Heart right ventricle (tissue), 16 donors: ENCODE measurements at regions of chr3 and their contacts with region 1.

Region 1: DNA sequence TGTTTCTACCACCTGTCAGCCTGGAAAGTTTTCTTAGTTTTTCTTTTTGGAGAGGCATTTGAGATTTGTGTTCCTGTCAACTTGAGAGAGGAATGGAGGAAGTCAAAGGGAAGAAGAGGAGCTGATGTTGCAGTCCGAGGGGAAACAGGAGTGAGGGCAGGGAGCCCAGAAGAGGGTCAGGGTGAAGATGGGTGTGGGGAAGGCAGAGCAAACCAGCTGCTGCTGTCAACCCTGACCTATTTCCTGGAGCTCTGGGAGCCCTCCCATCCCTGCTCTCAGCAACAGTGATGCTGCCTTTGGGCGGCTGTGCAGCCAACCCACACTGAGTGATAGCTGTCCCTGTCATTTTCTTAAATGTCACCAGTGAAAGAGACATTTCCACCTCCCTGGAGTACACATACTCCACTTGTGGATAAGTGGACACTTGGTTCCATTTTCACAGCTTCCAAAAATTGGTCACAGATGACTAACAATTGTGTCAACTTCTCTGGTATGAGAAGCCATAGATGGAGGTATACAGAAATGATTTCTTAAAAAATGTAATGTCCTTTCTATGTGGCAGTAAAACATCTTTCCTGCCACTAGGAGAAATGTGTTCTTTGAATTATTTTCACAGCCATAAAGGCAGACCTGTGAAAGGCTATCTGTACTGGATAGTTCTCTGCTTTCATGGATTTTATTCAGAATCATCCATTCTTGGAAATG is 556.3 kb upstream of the TBL1XR1 start:
- DNase-seq: peak; percentile 65 to 75
- ATAC-seq: peak; percentile 91 to 98 (median 94)
- H3K4me3 ChIP-seq: no peak overlapping the region
- H3K27ac ChIP-seq: peak overlapping the region in 9 of 10 donors; percentile 27 to 68 (median 50)
- H3K4me1 ChIP-seq: peaks cover 7 to 40% (median 26%) of the 10 kb centered on the region in 9 donors
- H3K27me3 ChIP-seq: no peaks in the 10 kb centered on the region
- CTCF ChIP-seq: no peak

Region 2: GRCh38 chr3:177516158-177517011 is 237.2 kb before region 1 on chr3:
- intact Hi-C with region 1: loop called in 1 of 10 experiments (anchors 10 kb)
- DNase-seq: peak; percentile 43 to 56
- ATAC-seq: peak; percentile 63 to 93 (median 84)
- H3K4me3 ChIP-seq: no peak overlapping the region
- H3K27ac ChIP-seq: peak overlapping the region; percentile 18 to 83 (median 62)
- H3K4me1 ChIP-seq: peaks cover 6 to 57% (median 35%) of the 10 kb centered on the region in 9 donors
- H3K27me3 ChIP-seq: no peaks in the 10 kb centered on the region
- CTCF ChIP-seq: no peak

Region 3: GRCh38 chr3:177944228-177944661 is 190.6 kb after region 1 on chr3:
- intact Hi-C with region 1: no loop called
- DNase-seq: no peak
- ATAC-seq: peak in 2 of 8 donors; percentile 17 to 46
- H3K4me3 ChIP-seq: no peak overlapping the region
- H3K27ac ChIP-seq: peak overlapping the region in 1 of 10 donors; percentile 56
- H3K4me1 ChIP-seq: peaks cover 0 to 28% (median 0%) of the 10 kb centered on the region in 9 donors
- H3K27me3 ChIP-seq: no peaks in the 10 kb centered on the region
- CTCF ChIP-seq: no peak